BJ (cell line): ENCODE measurements at regions of chr11 and their contacts with region 1.

Region 1: DNA sequence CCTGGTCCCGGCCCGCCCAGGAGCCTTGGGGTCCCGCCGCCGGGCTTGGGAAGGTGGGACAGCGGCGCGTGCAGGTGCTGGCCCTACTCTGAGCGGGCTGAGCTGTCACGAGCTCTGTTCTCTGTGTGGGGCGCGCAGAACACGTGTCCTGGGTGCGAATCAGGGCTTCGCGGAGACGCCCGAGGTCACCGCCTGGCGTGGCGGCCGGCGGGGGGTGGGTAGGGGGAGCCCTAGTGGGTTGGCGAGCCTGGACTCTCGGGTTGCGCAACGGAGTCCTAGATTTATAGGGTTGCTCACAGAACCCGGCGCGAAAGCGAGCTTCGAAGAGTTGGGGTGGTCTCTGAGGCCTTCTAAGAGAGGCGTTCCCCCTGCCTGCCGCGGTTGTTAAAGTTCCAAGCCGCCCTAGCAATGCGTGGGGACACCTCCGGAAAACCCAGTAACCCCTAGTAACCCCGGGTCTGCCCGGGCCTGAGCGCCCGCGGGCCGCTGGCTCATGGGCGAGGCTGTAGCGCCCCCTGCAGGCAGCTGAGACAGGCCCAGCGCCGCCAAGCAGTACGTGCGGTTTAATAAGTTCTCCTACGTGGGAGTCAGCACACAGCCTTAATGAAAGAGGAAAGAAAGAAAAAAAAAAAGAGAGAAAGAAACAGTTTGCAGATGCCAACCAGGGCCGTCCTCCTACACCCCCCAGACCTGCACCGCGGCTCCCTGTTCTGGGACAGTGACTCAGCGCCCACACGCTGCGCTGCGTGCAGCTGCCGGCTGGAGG is 2.8 kb downstream of the ADM start:
- DNase-seq: peak; percentile 63
- H3K4me3 ChIP-seq: peak overlapping the region; percentile 94
- H3K27me3 ChIP-seq: no peaks in the 10 kb centered on the region
- CTCF ChIP-seq: peak; percentile 89

Region 2: DNA sequence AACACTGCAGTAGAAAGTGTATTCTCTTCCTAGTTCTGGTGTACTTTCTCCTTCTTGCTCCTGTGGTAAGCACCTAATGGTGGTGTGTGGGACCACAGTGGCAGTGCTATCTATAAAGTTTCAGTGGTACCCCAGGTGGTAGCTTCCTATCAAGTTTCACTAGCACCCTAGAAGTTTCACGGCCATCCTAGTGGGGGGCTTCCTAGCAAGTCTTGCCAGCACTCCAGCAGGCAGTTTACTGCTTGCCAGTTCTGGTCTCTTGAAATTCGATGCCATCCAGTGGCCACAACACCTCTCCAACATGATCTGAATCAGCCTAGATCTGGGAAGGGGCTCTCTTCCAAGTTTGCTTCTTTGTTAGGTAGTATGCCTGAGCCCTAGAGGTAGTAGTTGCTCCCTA is 414.2 kb before region 1 on chr11:
- CTCF ChIA-PET with region 1: no interaction called
- POLR2A ChIA-PET with region 1: interaction called, 16 read pairs
- DNase-seq: no peak
- H3K4me3 ChIP-seq: no peak overlapping the region
- H3K27me3 ChIP-seq: no peaks in the 10 kb centered on the region
- CTCF ChIP-seq: no peak

Region 3: DNA sequence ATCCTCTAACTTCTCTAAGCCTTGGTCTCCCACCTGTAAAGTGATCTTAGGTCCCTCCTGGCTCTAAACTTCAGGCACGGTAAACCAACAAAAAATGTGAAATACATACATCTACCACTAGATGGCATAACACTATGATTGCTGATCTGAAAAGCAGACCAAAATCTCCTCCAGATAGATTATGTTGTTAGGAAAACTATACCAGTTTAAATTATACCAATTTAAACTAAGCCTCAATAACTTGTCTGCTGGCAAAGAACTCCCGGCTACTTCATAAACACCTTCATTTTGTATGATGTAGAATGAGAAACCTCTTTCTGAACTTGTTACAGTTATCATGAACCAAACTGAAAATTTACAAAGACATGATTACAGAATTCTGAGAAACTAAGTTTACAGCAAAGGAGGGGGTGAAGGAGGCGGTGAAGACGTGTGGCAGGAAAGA is 99.5 kb before region 1 on chr11:
- CTCF ChIA-PET with region 1: interaction called, 18 read pairs
- POLR2A ChIA-PET with region 1: interaction called, 4 read pairs
- DNase-seq: no peak
- H3K4me3 ChIP-seq: no peak overlapping the region
- H3K27me3 ChIP-seq: no peaks in the 10 kb centered on the region
- CTCF ChIP-seq: peak; percentile 66

Region 4: DNA sequence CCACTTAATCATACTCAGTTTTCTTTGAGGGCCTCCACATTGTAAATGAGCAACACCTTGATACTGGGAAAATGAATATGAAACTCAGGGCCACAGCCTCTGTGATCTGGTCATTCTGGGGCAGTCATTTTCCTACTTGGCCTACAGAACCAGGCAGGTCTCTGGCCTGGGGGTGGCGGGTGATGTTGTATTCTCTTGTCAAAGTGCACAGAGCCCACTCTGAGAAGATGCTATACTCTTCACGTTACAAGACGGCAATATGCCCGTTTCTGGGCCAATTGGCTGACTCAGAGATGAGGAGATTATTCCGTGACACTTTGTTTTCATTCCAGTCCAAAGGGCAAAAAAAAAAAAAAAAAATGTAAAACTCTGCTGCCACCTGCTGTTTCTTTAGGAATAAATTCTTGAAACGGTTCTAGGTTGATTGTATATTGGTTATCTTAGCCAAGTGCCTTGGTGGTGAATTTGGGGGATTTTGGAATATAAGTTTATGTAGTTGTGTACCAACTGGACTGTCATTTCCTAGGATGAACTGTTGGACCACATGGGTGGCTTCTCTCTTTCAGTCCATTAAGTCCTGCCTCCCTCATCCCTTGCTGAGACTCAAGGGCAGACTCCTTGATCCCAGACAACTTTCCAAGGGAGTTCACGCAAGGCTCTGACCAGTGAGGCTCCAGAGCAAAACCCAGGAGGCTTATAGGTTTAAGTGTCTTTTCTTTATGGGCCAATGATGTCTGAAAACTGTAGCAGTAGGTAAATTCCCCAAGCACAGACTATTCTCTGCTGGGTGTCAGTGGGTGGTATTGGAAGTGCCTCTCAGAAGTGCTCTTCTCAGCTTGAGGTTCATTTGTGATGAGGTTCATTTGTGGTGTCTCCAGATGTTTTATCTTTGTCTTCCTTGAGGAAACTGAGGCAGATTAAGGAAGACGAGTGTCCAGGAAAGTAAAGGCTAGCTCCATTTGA is 15.5 kb after region 1 on chr11:
- CTCF ChIA-PET with region 1: interaction called, 27 read pairs
- POLR2A ChIA-PET with region 1: interaction called, 11 read pairs
- DNase-seq: peak; percentile 69
- H3K4me3 ChIP-seq: no peak overlapping the region
- H3K27me3 ChIP-seq: no peaks in the 10 kb centered on the region
- CTCF ChIP-seq: peak; percentile 47

Region 5: GRCh38 chr11:10366568-10367370 is 59.1 kb after region 1 on chr11:
- CTCF ChIA-PET with region 1: interaction called, 38 read pairs
- POLR2A ChIA-PET with region 1: interaction called, 24 read pairs
- DNase-seq: peak; percentile 68
- H3K4me3 ChIP-seq: no peak overlapping the region
- H3K27me3 ChIP-seq: no peaks in the 10 kb centered on the region
- CTCF ChIP-seq: peak; percentile 95

Region 6: DNA sequence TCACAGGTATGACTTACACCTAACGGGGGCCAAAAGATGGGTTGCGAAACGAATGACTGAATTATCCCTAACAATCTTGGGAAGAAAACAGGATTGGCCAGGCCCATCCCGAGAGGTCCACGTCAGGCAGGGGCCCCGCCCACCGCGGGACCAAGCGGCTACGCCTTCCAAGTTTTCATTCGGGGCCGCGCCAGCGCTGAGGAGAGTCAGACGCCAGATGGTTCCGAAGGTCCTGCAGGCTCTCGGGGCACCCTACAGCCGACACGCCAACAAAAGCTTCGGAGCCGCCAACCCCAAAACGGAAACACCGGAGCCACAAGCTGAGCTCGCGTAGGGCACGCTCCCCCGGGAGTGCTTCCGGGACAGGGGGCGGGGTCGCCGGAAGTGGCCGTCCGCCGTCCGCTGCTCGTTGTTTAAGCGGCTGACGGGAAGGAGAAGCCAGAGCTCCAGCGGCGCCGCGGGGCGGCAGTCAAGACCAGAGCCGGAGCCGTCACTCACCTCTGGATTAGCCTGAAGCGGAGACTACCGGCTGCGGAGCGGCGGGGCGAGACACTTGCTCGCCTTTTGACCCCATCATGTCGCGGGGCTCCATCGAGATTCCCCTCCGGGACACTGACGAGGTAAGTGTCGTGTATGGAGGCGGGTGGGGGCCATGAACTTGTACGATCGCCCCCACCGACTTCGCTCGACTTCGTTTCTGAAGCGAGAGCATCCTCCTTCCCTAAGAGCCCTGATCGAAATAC is 443.4 kb after region 1 on chr11 and contains the start of gene CTR9:
- CTCF ChIA-PET with region 1: no interaction called
- POLR2A ChIA-PET with region 1: interaction called, 11 read pairs
- DNase-seq: peak; percentile 63
- H3K4me3 ChIP-seq: peak within 1 kb of the TSS; percentile 86
- H3K27me3 ChIP-seq: no peaks in the 10 kb centered on the region
- CTCF ChIP-seq: peak; percentile 58
- polyA plus RNA-seq, gene CTR9: 6.6 and 16.7 TPM in 2 replicates